ENCODE measurements at regions of chr1 and their contacts with region 1.

Region 1: DNA sequence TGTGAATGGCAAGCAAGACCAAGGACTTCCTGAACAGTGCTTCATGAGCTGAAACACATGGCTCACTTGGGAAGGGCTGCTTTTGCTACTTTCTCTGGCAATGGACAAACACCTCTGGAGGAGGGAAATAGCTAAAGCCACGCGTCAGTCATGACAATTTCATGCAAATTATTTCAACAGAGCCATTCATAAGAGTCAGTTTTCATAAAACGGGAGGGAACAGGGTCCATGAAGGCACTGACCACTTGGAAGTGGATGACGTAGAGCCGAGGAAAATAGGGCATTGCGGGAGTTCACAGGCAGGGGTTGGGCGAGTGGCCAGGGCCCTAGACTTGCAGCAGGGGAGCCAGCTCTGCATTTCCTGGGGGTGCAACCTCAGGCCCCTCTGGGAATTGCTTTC is 43.9 kb downstream of the SDC3 start:
- DNase-seq: no peak
- ATAC-seq: no peak
- H3K4me3 ChIP-seq: no peak overlapping the region
- H3K27ac ChIP-seq: no peak overlapping the region
- H3K4me1 ChIP-seq: no peaks in the 10 kb centered on the region
- H3K27me3 ChIP-seq: no peaks in the 10 kb centered on the region
- CTCF ChIP-seq: no peak

Region 2: GRCh38 chr1:30816211-30817076 is 48.2 kb before region 1 on chr1:
- CTCF ChIA-PET with region 1: no interaction called
- POLR2A ChIA-PET with region 1: interaction called, 12 read pairs
- intact Hi-C with region 1: no loop called
- DNase-seq: peak; percentile 84
- ATAC-seq: peak; percentile 93
- H3K4me3 ChIP-seq: no peak overlapping the region
- H3K27ac ChIP-seq: no peak overlapping the region
- H3K4me1 ChIP-seq: peaks cover 15% of the 10 kb centered on the region
- H3K27me3 ChIP-seq: no peaks in the 10 kb centered on the region
- CTCF ChIP-seq: no peak

Measured in PC-3 (cell line).